Activated naive CD4-positive, alpha-beta T cell treated with anti-CD3 and anti-CD28 coated beads for 36 hours (primary cell): ENCODE measurements at regions of chr19 and their contacts with region 1.

Region 1: GRCh38 chr19:51501594-51502263 is at the start of gene SIGLEC12:
- DNase-seq: peak; percentile 35
- H3K4me3 Mint-ChIP-seq: no peak within 1 kb of the TSS
- H3K27ac Mint-ChIP-seq: no peak within 1 kb of the TSS
- H3K4me1 Mint-ChIP-seq: peaks cover 9% of the 10 kb centered on the region
- H3K27me3 Mint-ChIP-seq: no peaks in the 10 kb centered on the region
- total RNA-seq, gene SIGLEC12: not detected

Region 2: DNA sequence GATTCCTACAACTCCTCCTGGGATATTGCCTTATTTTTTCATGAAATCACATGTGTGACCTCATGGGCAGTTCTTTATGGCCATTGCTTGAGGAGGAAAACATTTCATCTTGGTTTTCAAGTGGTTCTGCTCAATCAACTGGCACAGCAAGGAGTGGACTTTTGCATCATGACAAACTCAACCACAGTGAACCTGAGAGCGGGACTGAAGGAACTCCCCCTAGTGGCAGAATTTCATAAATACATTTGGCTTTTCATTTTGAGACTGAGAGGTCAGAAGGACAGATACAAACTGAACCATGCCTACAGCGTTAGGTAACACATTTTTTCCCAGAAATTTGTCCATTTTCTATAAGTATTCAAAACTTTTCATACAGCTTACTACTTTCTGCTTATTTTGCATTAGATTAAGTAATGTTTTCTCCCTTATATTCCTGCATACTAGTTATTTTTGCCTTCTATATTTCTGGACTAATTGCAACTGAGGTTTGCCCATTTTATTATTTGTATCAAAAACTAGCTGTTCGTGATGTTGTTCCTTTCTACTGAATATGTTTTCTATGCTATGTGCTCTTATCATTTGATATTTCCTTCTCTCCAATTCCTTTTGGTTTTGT is 13.2 kb after region 1 on chr19:
- CTCF ChIA-PET with region 1: interaction called, 20 read pairs
- intact Hi-C with region 1: no loop called
- DNase-seq: peak; percentile 31
- H3K4me3 Mint-ChIP-seq: no peak overlapping the region
- H3K27ac Mint-ChIP-seq: no peak overlapping the region
- H3K4me1 Mint-ChIP-seq: no peaks in the 10 kb centered on the region
- H3K27me3 Mint-ChIP-seq: peaks cover 15% of the 10 kb centered on the region